ENCODE measurements at regions of chr12 and their contacts with region 1.

Region 1: GRCh38 chr12:53984901-53985709 is at the start of gene HOXC10:
- DNase-seq: peak; percentile 97
- ATAC-seq: peak; percentile 82
- H3K4me3 Mint-ChIP-seq: peak within 1 kb of the TSS; percentile 12
- H3K27ac Mint-ChIP-seq: no peak within 1 kb of the TSS
- H3K4me1 Mint-ChIP-seq: peaks cover 27% of the 10 kb centered on the region
- H3K27me3 Mint-ChIP-seq: peaks cover 85% of the 10 kb centered on the region
- total RNA-seq, gene HOXC10: not detected

Region 2: GRCh38 chr12:53579545-53579955 is 405.6 kb before region 1 on chr12:
- CTCF ChIA-PET with region 1: no interaction called
- POLR2A ChIA-PET with region 1: no interaction called
- intact Hi-C with region 1: no loop called
- DNase-seq: no peak
- ATAC-seq: no peak
- H3K4me3 Mint-ChIP-seq: no peak overlapping the region
- H3K27ac Mint-ChIP-seq: no peak overlapping the region
- H3K4me1 Mint-ChIP-seq: peaks cover 30% of the 10 kb centered on the region
- H3K27me3 Mint-ChIP-seq: no peaks in the 10 kb centered on the region

Region 3: GRCh38 chr12:53917126-53917653 is 67.9 kb before region 1 on chr12:
- CTCF ChIA-PET with region 1: no interaction called
- POLR2A ChIA-PET with region 1: no interaction called
- intact Hi-C with region 1: no loop called
- DNase-seq: no peak
- ATAC-seq: no peak
- H3K4me3 Mint-ChIP-seq: no peak overlapping the region
- H3K27ac Mint-ChIP-seq: no peak overlapping the region
- H3K4me1 Mint-ChIP-seq: no peaks in the 10 kb centered on the region
- H3K27me3 Mint-ChIP-seq: peaks cover 44% of the 10 kb centered on the region

Region 4: GRCh38 chr12:53995378-53996239 is 10.5 kb after region 1 on chr12:
- CTCF ChIA-PET with region 1: interaction called, 17 read pairs
- POLR2A ChIA-PET with region 1: no interaction called
- intact Hi-C with region 1: no loop called
- DNase-seq: peak; percentile 47
- ATAC-seq: peak; percentile 42
- H3K4me3 Mint-ChIP-seq: peak overlapping the region; percentile 65
- H3K27ac Mint-ChIP-seq: no peak overlapping the region
- H3K4me1 Mint-ChIP-seq: peaks cover 27% of the 10 kb centered on the region
- H3K27me3 Mint-ChIP-seq: peaks cover 83% of the 10 kb centered on the region

Region 5: GRCh38 chr12:54032627-54033100 is 47.6 kb after region 1 on chr12 and contains the start of gene HOXC5:
- CTCF ChIA-PET with region 1: interaction called, 13 read pairs
- POLR2A ChIA-PET with region 1: no interaction called
- intact Hi-C with region 1: no loop called
- DNase-seq: peak; percentile 81
- ATAC-seq: peak; percentile 36
- H3K4me3 Mint-ChIP-seq: peak within 1 kb of the TSS; percentile 28
- H3K27ac Mint-ChIP-seq: no peak within 1 kb of the TSS
- H3K4me1 Mint-ChIP-seq: peaks cover 25% of the 10 kb centered on the region
- H3K27me3 Mint-ChIP-seq: peaks cover 64% of the 10 kb centered on the region
- total RNA-seq, gene HOXC5: not detected

Region 6: DNA sequence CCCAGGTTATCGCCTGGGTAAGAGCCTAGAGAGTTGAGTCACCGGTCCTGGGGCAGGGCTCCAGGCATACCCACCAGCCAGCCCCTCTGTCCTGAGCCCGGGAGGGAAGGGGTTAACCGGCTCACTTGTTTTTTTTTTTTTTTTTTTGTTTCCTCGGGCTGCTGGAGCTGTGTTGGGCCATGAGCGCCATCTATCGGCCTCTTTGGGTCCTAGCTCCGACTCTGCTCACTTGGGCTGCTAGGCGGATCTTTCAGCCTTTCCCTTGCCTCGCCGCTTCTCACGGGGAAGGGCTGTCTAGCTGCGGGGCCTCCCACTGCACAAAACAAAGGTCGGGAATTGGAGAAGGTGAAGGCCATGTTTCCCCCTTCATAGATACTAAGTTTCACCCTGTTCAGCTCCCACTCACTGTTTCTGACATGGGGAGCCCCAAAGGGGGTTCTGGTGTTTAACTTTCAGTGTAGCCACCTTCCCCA is 206.5 kb after region 1 on chr12:
- CTCF ChIA-PET with region 1: interaction called, 16 read pairs
- POLR2A ChIA-PET with region 1: no interaction called
- intact Hi-C with region 1: loop called (anchors 2 to 5 kb)
- DNase-seq: peak; percentile 87
- ATAC-seq: peak; percentile 60
- H3K4me3 Mint-ChIP-seq: no peak overlapping the region
- H3K27ac Mint-ChIP-seq: no peak overlapping the region
- H3K4me1 Mint-ChIP-seq: peaks cover 17% of the 10 kb centered on the region
- H3K27me3 Mint-ChIP-seq: peaks cover 35% of the 10 kb centered on the region

Region 7: DNA sequence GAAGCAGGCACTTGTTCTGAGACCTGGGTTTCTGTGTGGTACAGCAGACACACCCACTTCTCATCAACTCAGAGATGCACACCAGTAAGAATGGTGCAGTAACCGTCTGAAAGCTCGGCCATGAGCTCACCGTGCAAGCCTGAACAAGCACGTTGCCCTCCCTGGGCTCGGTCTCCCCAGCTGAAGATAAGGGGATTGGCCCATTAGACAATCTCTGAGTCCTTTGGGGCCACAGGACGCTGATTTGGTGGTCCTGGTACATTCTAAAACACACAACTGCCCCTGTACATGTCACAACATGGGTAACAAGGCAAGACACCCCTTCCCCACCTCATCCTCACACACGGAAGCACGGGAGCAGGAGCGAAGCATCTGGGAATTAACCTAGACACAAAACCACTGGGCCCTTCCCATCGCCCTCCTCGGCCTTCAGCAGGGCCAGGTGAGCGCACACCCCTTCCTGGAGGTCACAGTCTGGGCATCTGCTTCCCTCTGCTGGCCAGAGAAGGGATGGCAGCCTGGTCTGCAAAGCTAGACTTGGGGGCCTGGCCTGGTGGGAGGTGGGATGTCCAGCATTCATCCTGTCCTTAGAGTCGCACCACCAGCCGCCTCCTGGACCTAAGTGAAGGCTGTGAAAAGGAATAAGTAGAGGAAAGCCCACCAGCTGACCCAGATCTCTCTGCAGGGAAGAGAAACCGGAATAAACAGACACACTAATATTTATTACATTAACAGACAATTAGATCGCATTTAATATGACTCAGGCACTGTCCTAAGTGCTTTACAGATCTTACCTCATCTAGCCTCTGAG is 222.6 kb after region 1 on chr12:
- CTCF ChIA-PET with region 1: interaction called, 37 read pairs
- POLR2A ChIA-PET with region 1: no interaction called
- intact Hi-C with region 1: loop called in 1 of 2 experiments (anchors 1 kb)
- DNase-seq: peak; percentile 88
- ATAC-seq: peak; percentile 93
- H3K4me3 Mint-ChIP-seq: no peak overlapping the region
- H3K27ac Mint-ChIP-seq: no peak overlapping the region
- H3K4me1 Mint-ChIP-seq: no peaks in the 10 kb centered on the region
- H3K27me3 Mint-ChIP-seq: peaks cover 25% of the 10 kb centered on the region

Measured in activated CD4-positive, alpha-beta T cell treated with anti-CD3 and anti-CD28 coated beads for 36 hours (primary cell).